ENCODE measurements at regions of chr5 and their contacts with region 1.

Region 1: GRCh38 chr5:170267431-170268152 is 30.0 kb downstream of the LCP2 start:
- DNase-seq: peak; percentile 28
- ATAC-seq: peak; percentile 93
- H3K4me3 ChIP-seq: no peak overlapping the region
- H3K27ac ChIP-seq: no peak overlapping the region
- H3K4me1 ChIP-seq: no peaks in the 10 kb centered on the region
- H3K27me3 ChIP-seq: peaks cover 1 to 15% of the 10 kb centered on the region in 2 experiments; a peak in 2 of 5 replicates
- CTCF ChIP-seq: peak; percentile 64
- EP300 ChIP-seq: no peak
- POLR2A ChIP-seq: no peak
- RAD21 ChIP-seq: no peak

Region 2: GRCh38 chr5:170404402-170404801 is 136.8 kb after region 1 on chr5:
- CTCF ChIA-PET with region 1: no interaction called
- POLR2A ChIA-PET with region 1: no interaction called
- in situ Hi-C with region 1: loop called (anchors 10 kb)
- intact Hi-C with region 1: no loop called
- DNase-seq: no peak
- ATAC-seq: no peak
- H3K4me3 ChIP-seq: no peak overlapping the region
- H3K27ac ChIP-seq: no peak overlapping the region
- H3K4me1 ChIP-seq: no peaks in the 10 kb centered on the region
- H3K27me3 ChIP-seq: peaks cover 0 to 5% of the 10 kb centered on the region in 2 experiments; a peak in 1 of 5 replicates
- CTCF ChIP-seq: no peak
- EP300 ChIP-seq: no peak
- POLR2A ChIP-seq: no peak
- RAD21 ChIP-seq: no peak

Region 3: DNA sequence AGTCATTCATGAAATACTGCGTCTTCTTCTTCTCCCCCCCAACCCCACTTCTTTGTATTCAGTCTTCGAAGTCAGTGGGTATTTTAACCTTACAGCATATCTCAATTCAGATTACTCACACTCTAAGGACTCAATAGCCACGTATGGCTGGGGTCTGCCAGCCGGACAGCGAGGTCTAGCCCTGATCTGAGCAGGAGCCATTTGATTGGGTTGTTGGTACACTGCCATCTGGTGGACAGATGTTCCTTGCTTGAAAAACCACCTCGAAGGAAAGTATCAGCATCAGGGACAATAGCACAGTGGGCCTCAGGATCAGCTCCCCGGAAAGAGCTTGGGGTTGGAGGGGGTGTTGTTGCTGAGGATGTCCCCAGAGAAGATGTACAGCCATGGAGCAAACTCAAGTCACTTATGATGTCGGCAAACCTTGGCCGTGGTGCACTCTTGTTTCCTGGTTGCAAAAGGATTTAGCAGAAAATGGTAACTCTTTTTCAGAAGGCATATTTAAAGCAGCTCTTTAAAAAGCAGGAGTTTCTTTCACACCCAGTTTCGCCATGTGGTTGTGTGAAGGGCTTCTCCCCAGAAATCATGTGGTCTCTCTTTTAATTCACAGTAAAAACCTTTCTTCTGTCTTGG is 153.3 kb after region 1 on chr5:
- CTCF ChIA-PET with region 1: no interaction called
- POLR2A ChIA-PET with region 1: no interaction called
- in situ Hi-C with region 1: no loop called
- intact Hi-C with region 1: loop called (anchors 2 kb)
- DNase-seq: peak; percentile 49
- ATAC-seq: peak; percentile 87
- H3K4me3 ChIP-seq: no peak overlapping the region
- H3K27ac ChIP-seq: no peak overlapping the region
- H3K4me1 ChIP-seq: no peaks in the 10 kb centered on the region
- H3K27me3 ChIP-seq: no peaks in the 10 kb centered on the region; a peak in 2 of 5 replicates
- CTCF ChIP-seq: peak; percentile 72
- EP300 ChIP-seq: no peak
- POLR2A ChIP-seq: no peak
- RAD21 ChIP-seq: no peak

Region 4: DNA sequence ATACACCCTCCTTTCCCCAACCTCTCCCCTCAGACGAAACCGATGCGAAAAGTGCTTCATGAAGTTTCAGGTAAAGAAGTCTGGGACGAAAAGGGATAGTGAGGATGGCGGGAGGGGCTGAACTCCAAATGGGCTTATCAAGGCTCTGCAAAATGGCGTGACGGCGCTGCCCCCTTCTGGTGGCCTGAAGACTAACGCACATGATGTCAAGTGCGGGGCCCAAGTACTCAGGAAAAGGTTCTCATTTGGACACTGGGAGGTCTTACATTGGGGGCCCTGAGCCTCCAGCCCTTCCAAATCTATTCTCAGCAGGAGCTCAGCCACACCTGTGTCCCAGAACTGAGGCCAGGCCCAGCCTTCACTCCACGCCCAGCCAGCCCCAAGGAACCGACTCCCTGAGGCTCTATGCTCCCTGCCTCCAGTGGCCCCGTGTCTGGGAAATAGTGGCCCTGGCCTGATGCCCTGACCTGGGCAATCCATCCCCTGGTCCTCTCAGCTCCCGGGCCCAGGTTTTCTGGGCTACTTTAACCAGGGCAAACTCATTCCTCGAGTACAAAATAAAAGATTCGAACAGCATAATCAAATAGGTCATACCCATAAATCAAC is 356.1 kb after region 1 on chr5:
- CTCF ChIA-PET with region 1: no interaction called
- POLR2A ChIA-PET with region 1: no interaction called
- in situ Hi-C with region 1: no loop called
- intact Hi-C with region 1: loop called (anchors 5 kb)
- DNase-seq: peak; percentile 20
- ATAC-seq: peak; percentile 85
- H3K4me3 ChIP-seq: no peak overlapping the region
- H3K27ac ChIP-seq: no peak overlapping the region
- H3K4me1 ChIP-seq: no peaks in the 10 kb centered on the region
- H3K27me3 ChIP-seq: peaks cover 0 to under 1% of the 10 kb centered on the region in 2 experiments; a peak in 1 of 5 replicates
- CTCF ChIP-seq: peak; percentile 77
- EP300 ChIP-seq: no peak
- POLR2A ChIP-seq: no peak
- RAD21 ChIP-seq: no peak